Endothelial cell of umbilical vein (primary cell): ENCODE measurements at regions of chr2 and their contacts with region 1.

Region 1: DNA sequence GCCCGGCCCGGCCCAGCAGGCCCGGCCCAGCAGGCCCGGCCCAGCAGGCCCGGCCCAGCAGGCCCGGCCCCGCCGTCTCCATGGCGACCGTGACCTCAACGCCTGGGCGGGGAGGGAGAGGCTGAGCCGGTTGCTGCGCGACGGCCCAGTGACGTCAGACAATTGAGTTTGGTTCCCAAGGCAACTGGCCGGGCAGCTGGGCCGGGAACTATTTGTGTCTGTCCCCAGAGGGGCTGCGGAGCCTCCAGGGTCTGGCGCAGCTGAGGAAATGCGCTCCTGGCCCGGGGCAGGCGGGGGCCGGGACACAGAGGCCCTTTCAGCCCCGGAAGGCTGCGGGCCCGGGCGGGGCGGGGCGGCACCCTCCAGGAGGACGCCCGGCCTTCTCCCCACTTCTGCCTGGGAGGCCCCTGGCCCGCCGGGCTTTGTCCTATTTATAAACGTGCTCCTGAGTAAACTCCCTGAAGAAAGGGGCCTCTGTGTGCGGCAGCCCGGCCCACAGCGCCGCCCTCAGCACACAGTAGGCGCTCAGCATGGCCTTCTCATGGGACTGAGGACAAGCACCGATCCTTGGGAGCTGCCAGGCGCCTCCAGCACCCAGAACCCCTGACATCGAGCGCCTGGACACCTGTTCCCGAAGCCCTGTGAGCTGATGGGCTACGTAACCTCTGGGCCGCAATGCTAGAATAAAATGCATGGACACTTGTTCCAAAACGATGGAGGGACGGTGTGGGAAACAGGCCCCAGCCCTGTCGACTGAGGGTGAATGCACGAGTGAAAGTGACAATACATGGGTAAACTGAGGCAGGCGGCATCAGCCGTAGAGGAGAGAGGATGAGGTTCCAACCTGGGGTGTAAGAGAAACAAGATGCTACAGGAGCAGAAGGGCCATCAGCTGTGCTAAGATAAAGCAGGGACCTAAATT is 12.3 kb downstream of the TEX44 start:
- DNase-seq: peak; percentile 98
- H3K4me3 ChIP-seq: peak overlapping the region in 2 of 3 experiments; percentile 48 to 53
- H3K27ac ChIP-seq: peak overlapping the region; percentile 92
- H3K4me1 ChIP-seq: peaks cover 10% of the 10 kb centered on the region
- H3K27me3 ChIP-seq: no peaks in the 10 kb centered on the region
- CTCF ChIP-seq: no peak
- POLR2A ChIP-seq: no peak

Region 2: GRCh38 chr2:231482806-231483391 is 122.0 kb before region 1 on chr2:
- CTCF ChIA-PET with region 1: interaction called, 21 read pairs
- POLR2A ChIA-PET with region 1: no interaction called
- dilution Hi-C with region 1: no loop called
- intact Hi-C with region 1: loop called (anchors 2 kb)
- DNase-seq: peak; percentile 75
- H3K4me3 ChIP-seq: peak overlapping the region; percentile 9 to 46 (median 39)
- H3K27ac ChIP-seq: peak overlapping the region; percentile 50
- H3K4me1 ChIP-seq: peaks cover 9% of the 10 kb centered on the region
- H3K27me3 ChIP-seq: no peaks in the 10 kb centered on the region
- CTCF ChIP-seq: peak; percentile 95 to 98
- POLR2A ChIP-seq: no peak

Region 3: GRCh38 chr2:231563378-231563961 is 41.5 kb before region 1 on chr2:
- CTCF ChIA-PET with region 1: interaction called, 214 read pairs
- POLR2A ChIA-PET with region 1: no interaction called
- dilution Hi-C with region 1: no loop called
- intact Hi-C with region 1: loop called (anchors 1 kb)
- DNase-seq: peak; percentile 60
- H3K4me3 ChIP-seq: no peak overlapping the region
- H3K27ac ChIP-seq: no peak overlapping the region
- H3K4me1 ChIP-seq: no peaks in the 10 kb centered on the region
- H3K27me3 ChIP-seq: no peaks in the 10 kb centered on the region
- CTCF ChIP-seq: peak; percentile 39 to 79
- POLR2A ChIP-seq: no peak

Region 4: DNA sequence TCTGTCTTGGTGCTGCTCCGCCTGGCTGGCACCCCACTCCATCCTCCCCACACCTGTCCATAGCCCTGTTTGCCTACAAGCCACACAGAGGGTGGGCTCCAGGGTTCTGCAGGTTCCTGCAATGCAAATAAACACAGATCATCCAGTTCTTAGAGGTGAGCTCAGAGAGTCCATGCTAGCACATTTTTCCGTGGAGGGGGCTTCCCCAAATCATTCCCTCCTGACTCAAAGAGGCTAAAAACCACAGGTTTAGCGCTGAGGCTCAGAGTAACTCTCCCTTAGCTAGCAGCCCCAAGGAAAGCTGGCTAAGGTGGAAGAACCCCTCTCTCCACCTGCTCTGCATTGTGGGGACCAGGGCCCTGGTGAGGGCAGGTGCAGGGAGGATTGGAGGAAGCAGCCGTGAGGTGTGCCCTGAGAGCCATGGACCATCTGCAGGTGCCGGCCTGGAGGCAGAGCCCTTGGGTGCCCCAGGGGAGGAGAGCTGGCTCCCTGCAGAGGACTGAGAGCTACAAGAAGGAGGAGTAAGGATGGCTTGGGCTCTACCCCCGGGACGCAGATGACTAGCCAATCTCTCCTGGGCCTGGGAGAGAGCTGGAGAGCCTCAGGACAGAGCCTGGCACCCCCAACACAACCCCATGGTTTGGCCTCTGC is 36.0 kb before region 1 on chr2:
- CTCF ChIA-PET with region 1: interaction called, 214 read pairs
- POLR2A ChIA-PET with region 1: no interaction called
- dilution Hi-C with region 1: no loop called
- intact Hi-C with region 1: no loop called
- DNase-seq: no peak
- H3K4me3 ChIP-seq: no peak overlapping the region
- H3K27ac ChIP-seq: no peak overlapping the region
- H3K4me1 ChIP-seq: no peaks in the 10 kb centered on the region
- H3K27me3 ChIP-seq: no peaks in the 10 kb centered on the region
- CTCF ChIP-seq: no peak
- POLR2A ChIP-seq: no peak

Region 5: GRCh38 chr2:231583982-231584381 is 21.0 kb before region 1 on chr2:
- CTCF ChIA-PET with region 1: interaction called, 15 read pairs
- POLR2A ChIA-PET with region 1: no interaction called
- dilution Hi-C with region 1: no loop called
- intact Hi-C with region 1: no loop called
- DNase-seq: no peak
- H3K4me3 ChIP-seq: no peak overlapping the region
- H3K27ac ChIP-seq: no peak overlapping the region
- H3K4me1 ChIP-seq: no peaks in the 10 kb centered on the region
- H3K27me3 ChIP-seq: peaks cover 2 to 3% of the 10 kb centered on the region in 2 experiments
- CTCF ChIP-seq: no peak
- POLR2A ChIP-seq: no peak

Region 6: GRCh38 chr2:231590619-231591018 is 14.3 kb before region 1 on chr2:
- CTCF ChIA-PET with region 1: interaction called, 22 read pairs
- POLR2A ChIA-PET with region 1: interaction called, 4 read pairs
- dilution Hi-C with region 1: no loop called
- intact Hi-C with region 1: no loop called
- DNase-seq: no peak
- H3K4me3 ChIP-seq: no peak overlapping the region
- H3K27ac ChIP-seq: no peak overlapping the region
- H3K4me1 ChIP-seq: no peaks in the 10 kb centered on the region
- H3K27me3 ChIP-seq: peaks cover 4 to 5% of the 10 kb centered on the region in 2 experiments
- CTCF ChIP-seq: no peak
- POLR2A ChIP-seq: no peak

Region 7: GRCh38 chr2:231642631-231643494 is 37.9 kb after region 1 on chr2:
- CTCF ChIA-PET with region 1: interaction called, 10 read pairs
- POLR2A ChIA-PET with region 1: no interaction called
- dilution Hi-C with region 1: no loop called
- intact Hi-C with region 1: no loop called
- DNase-seq: peak; percentile 94
- H3K4me3 ChIP-seq: peak overlapping the region in 2 of 3 experiments; percentile 6 to 19
- H3K27ac ChIP-seq: peak overlapping the region; percentile 77
- H3K4me1 ChIP-seq: peaks cover 16% of the 10 kb centered on the region
- H3K27me3 ChIP-seq: no peaks in the 10 kb centered on the region
- CTCF ChIP-seq: no peak
- POLR2A ChIP-seq: no peak